ENCODE measurements at regions of chr4 and their contacts with region 1.

Region 1: GRCh38 chr4:102586644-102587021 is 85.5 kb downstream of the NFKB1 start:
- DNase-seq: no peak
- ATAC-seq: no peak
- H3K4me3 Mint-ChIP-seq: no peak overlapping the region
- H3K27ac Mint-ChIP-seq: peak overlapping the region; percentile 33
- H3K4me1 Mint-ChIP-seq: peaks cover 14% of the 10 kb centered on the region
- H3K27me3 Mint-ChIP-seq: no peaks in the 10 kb centered on the region
- CTCF ChIP-seq: no peak

Region 2: GRCh38 chr4:102564399-102565059 is 22.1 kb before region 1 on chr4:
- CTCF ChIA-PET with region 1: no interaction called
- POLR2A ChIA-PET with region 1: no interaction called
- intact Hi-C with region 1: no loop called
- DNase-seq: peak; percentile 37
- ATAC-seq: peak; percentile 91
- H3K4me3 Mint-ChIP-seq: peak overlapping the region; percentile 61
- H3K27ac Mint-ChIP-seq: peak overlapping the region; percentile 90
- H3K4me1 Mint-ChIP-seq: peaks cover 85% of the 10 kb centered on the region
- H3K27me3 Mint-ChIP-seq: no peaks in the 10 kb centered on the region
- CTCF ChIP-seq: no peak

Region 3: GRCh38 chr4:102598086-102598761 is 11.6 kb after region 1 on chr4:
- CTCF ChIA-PET with region 1: no interaction called
- POLR2A ChIA-PET with region 1: no interaction called
- intact Hi-C with region 1: loop called (anchors 1 kb)
- DNase-seq: no peak
- ATAC-seq: no peak
- H3K4me3 Mint-ChIP-seq: no peak overlapping the region
- H3K27ac Mint-ChIP-seq: peak overlapping the region; percentile 78
- H3K4me1 Mint-ChIP-seq: peaks cover 33% of the 10 kb centered on the region
- H3K27me3 Mint-ChIP-seq: no peaks in the 10 kb centered on the region
- CTCF ChIP-seq: no peak

Region 4: GRCh38 chr4:102604222-102604948 is 17.8 kb after region 1 on chr4:
- CTCF ChIA-PET with region 1: no interaction called
- POLR2A ChIA-PET with region 1: no interaction called
- intact Hi-C with region 1: loop called (anchors 2 kb)
- DNase-seq: no peak
- ATAC-seq: no peak
- H3K4me3 Mint-ChIP-seq: no peak overlapping the region
- H3K27ac Mint-ChIP-seq: no peak overlapping the region
- H3K4me1 Mint-ChIP-seq: peaks cover 4% of the 10 kb centered on the region
- H3K27me3 Mint-ChIP-seq: no peaks in the 10 kb centered on the region
- CTCF ChIP-seq: no peak

Region 5: DNA sequence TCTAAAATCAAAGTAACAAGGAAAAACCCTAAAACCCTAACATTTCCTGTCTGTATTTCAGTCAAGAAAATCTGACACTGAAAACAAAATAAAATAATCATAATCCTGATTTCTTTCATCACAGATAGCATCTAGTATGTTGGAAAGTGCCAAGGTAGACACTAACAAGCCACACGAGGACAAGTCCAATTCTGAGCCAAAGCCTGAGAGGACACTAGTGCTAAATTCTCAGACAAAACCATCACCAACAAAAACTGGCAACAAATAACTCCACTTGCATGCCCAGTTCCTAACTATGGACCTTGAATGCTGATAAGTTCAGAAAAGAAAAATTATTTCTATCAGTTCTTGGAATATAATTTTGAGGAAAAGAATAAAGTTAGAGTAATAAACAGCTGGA is 60.5 kb after region 1 on chr4:
- CTCF ChIA-PET with region 1: no interaction called
- POLR2A ChIA-PET with region 1: no interaction called
- intact Hi-C with region 1: no loop called
- DNase-seq: no peak
- ATAC-seq: no peak
- H3K4me3 Mint-ChIP-seq: no peak overlapping the region
- H3K27ac Mint-ChIP-seq: no peak overlapping the region
- H3K4me1 Mint-ChIP-seq: no peaks in the 10 kb centered on the region
- H3K27me3 Mint-ChIP-seq: no peaks in the 10 kb centered on the region
- CTCF ChIP-seq: no peak

Measured in activated B cell treated with CpG ODN at 0.5 μM for 24 hours (primary cell).